Panc1 (cell line): ENCODE measurements at regions of chr17 and their contacts with region 1.

Region 1: DNA sequence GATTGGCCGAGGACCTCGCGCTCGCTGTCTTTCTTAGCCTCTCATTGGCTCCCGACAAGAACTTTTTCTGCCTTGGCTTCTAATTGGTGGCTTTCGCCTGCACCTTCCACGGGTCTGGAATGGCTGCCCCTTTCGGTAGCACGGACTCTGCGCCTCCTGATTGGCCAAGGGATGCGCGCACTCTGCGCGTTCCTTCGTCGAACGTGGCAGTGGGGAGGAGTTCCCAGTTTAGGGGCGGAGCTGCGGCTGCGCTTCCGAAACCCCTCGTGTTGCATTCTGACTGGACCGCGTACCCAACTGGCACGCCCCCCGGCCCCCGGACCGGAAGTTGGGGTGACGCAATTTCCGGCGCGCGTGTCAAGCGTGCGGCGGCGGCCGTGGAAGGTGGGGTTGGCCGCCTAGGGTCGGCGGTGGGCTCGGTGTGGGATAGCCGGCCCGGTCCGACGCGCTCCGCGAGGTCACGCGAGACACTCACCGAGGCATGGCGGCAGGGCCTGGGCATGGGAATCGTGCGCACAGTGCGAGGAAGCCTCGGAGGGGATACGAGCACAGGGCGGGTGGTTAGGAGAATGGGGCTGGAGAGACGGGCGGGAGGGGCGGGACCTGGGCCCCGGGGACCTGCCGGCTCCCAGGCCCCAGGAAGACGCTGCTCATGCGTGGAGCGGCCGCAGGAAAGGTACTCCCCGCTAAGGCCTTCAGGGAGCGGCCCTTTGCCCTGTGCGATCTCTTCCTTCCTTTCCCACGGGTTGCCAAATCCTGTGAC is 602 bp upstream of the P4HB start:
- DNase-seq: peak; percentile 99
- ATAC-seq: peak; percentile 94
- H3K4me3 ChIP-seq: peak overlapping the region; percentile 83 to 99
- H3K27ac ChIP-seq: peak overlapping the region; percentile 95
- H3K4me1 ChIP-seq: peaks cover 32% of the 10 kb centered on the region
- H3K27me3 ChIP-seq: no peaks in the 10 kb centered on the region
- CTCF ChIP-seq: no peak

Region 2: GRCh38 chr17:81722184-81723120 is 138.5 kb before region 1 on chr17:
- CTCF ChIA-PET with region 1: no interaction called
- POLR2A ChIA-PET with region 1: interaction called, 11 read pairs
- in situ Hi-C with region 1: no loop called
- intact Hi-C with region 1: no loop called
- DNase-seq: no peak
- ATAC-seq: peak; percentile 46
- H3K4me3 ChIP-seq: no peak overlapping the region
- H3K27ac ChIP-seq: no peak overlapping the region
- H3K4me1 ChIP-seq: peaks cover 13% of the 10 kb centered on the region
- H3K27me3 ChIP-seq: no peaks in the 10 kb centered on the region
- CTCF ChIP-seq: no peak

Region 3: DNA sequence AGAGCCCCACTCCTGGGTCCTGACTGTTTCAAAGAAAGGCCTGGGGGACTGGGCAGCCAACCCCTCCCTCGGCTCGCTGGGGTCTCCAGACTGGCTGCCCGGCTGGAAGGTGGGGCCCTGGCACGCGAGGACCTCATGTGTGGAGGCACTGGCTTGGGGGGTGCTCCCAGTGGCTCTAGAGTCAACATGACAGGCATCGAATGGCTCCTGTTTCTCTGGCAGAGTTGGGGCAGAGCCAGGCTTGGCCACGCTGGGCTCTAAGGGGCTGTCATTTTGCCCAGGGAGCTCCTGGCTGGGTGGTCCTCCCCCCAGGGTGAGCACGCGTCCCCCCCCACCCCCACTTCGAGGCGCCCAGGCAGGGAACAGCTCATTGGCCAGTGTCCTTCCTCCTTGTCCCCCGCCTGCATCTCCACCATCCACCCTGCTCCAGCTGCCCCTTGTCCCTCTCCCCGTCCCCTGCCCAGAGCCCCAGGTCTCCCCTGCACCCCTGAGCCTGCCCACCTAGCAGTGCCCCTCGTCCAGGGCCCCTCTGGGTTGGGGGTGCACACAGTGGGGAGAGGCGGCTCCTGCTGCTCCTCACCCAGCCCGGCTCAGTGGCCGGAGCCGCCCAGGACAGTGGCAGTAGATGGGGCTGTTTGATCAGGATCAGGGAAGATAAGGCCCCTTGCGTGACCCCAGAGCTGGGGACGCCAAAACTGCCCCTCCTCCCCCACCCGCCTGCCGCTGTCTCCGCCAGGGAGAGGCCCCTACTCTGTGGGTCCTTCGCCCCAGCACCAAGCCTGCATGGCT is 54.3 kb before region 1 on chr17:
- CTCF ChIA-PET with region 1: no interaction called
- POLR2A ChIA-PET with region 1: interaction called, 17 read pairs
- in situ Hi-C with region 1: no loop called
- intact Hi-C with region 1: no loop called
- DNase-seq: no peak
- ATAC-seq: peak; percentile 42
- H3K4me3 ChIP-seq: no peak overlapping the region
- H3K27ac ChIP-seq: no peak overlapping the region
- H3K4me1 ChIP-seq: peaks cover 5% of the 10 kb centered on the region
- H3K27me3 ChIP-seq: no peaks in the 10 kb centered on the region; the same call in 1 of the 2 replicates
- CTCF ChIP-seq: no peak; the same call in 1 of the 2 replicates

Region 4: GRCh38 chr17:82603981-82604448 is 743.1 kb after region 1 on chr17:
- CTCF ChIA-PET with region 1: no interaction called
- POLR2A ChIA-PET with region 1: no interaction called
- in situ Hi-C with region 1: no loop called
- intact Hi-C with region 1: no loop called
- DNase-seq: no peak
- ATAC-seq: no peak
- H3K4me3 ChIP-seq: no peak overlapping the region
- H3K27ac ChIP-seq: no peak overlapping the region
- H3K4me1 ChIP-seq: no peaks in the 10 kb centered on the region
- H3K27me3 ChIP-seq: no peaks in the 10 kb centered on the region
- CTCF ChIP-seq: no peak